ENCODE measurements at regions of chr10 and their contacts with region 1.

Region 1: DNA sequence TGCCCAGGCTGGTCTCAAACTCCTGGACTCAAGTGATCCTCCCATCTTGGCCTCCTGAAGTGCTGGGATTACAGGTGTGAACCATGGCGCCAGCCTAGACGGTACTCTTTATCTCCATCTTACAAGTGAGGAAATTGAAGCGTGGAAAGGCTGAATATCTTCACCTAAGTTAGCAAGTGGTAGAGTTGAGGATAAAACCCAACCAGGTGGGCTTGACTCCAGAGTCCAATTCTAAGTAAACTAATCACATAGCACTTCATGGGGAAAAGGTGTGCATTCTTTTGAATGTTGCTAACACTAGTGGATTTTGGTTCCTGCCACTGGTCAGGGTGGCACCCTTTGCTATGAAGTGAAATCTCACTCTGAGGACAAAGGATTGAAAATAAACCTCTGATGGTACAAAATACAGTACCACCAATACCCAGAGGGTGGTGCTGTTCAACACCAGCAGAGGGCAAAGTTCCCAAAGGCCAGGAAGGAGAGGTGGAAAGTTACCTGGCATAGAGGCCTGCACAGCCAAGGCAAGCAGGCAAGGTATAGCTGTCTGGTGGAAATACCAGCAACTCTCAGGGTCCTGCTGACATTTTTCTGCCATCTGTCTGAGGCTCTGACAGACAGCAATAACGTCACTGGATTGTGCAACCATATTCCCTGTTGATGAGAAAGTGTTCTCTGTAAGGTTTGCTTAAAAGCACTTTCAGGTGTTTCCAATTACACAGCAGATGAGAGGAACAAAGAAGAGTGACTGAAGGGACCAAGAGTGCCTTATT is 17.6 kb downstream of the ZDHHC16 start:
- DNase-seq: peak; percentile 58
- CTCF ChIP-seq: peak; percentile 75

Region 2: DNA sequence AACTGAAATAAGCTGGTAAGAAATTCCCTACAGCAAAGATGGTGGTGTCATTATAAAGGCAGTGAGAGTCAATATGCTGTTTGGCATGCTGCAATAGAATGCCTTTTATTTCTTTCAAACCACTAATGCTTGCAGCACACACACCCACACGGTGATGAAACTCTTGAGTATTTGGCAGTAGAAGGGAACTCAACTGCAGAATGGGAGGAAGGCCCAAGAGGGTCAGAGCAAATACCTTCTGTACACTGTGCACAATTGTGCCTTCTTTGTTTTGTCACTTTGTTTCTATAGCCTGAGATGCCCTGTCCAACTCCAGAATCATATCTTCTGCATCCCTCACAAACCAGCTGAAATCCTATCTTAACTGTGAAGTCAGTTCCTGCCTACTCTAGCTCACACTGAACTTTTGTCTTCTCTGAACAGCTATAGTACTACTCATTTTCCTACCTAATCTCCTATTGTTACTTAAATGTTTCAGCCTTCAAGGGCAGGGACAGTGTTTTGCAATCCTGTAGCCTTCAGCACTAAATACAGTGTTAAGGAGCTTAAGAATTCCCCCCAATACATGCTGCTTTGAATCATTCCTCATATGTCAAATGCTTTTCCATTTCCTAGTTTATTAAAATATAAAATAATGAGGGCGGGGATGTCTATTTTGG is 12.5 kb after region 1 on chr10:
- CTCF ChIA-PET with region 1: interaction called, 12 read pairs
- POLR2A ChIA-PET with region 1: no interaction called
- DNase-seq: no peak
- CTCF ChIP-seq: no peak

Region 3: GRCh38 chr10:97601268-97602215 is 138.0 kb after region 1 on chr10:
- CTCF ChIA-PET with region 1: no interaction called
- POLR2A ChIA-PET with region 1: no interaction called
- DNase-seq: no peak
- CTCF ChIP-seq: no peak

Measured in GM10248 (cell line).